GM23248 (cell line): ENCODE measurements at regions of chr1 and their contacts with region 1.

Region 1: GRCh38 chr1:163071405-163072255 is 2.5 kb downstream of the RGS4 start:
- DNase-seq: peak; percentile 93
- H3K4me3 ChIP-seq: peak overlapping the region; percentile 82
- H3K27ac ChIP-seq: peak overlapping the region; percentile 20
- H3K4me1 ChIP-seq: peaks cover 32% of the 10 kb centered on the region
- H3K27me3 ChIP-seq: no peaks in the 10 kb centered on the region

Region 2: DNA sequence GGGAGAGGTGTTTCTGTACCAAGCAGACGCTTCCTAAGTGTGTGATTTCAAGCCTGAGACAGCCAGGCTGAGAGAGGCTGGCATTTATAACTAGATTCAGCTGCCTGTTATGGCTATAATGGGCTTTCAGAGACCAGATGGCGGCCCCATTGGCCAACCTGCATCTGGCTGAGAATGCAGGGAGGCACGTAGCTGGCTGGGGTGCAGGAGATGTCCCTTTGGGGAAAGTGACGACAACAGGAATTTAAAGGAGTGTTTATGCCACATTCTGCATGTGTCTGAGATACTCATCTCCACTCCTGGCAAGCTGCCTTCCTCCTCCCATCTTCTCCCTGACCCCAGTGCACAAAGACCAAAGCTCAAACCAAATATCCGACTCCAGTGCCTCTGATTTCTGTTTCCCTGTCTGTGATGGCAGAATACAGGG is 189.4 kb before region 1 on chr1:
- in situ Hi-C with region 1: loop called (anchors 10 kb)
- DNase-seq: peak; percentile 36
- H3K4me3 ChIP-seq: no peak overlapping the region
- H3K27ac ChIP-seq: no peak overlapping the region
- H3K4me1 ChIP-seq: peaks cover 6% of the 10 kb centered on the region; the same call in 1 of the 2 replicates
- H3K27me3 ChIP-seq: no peaks in the 10 kb centered on the region

Region 3: DNA sequence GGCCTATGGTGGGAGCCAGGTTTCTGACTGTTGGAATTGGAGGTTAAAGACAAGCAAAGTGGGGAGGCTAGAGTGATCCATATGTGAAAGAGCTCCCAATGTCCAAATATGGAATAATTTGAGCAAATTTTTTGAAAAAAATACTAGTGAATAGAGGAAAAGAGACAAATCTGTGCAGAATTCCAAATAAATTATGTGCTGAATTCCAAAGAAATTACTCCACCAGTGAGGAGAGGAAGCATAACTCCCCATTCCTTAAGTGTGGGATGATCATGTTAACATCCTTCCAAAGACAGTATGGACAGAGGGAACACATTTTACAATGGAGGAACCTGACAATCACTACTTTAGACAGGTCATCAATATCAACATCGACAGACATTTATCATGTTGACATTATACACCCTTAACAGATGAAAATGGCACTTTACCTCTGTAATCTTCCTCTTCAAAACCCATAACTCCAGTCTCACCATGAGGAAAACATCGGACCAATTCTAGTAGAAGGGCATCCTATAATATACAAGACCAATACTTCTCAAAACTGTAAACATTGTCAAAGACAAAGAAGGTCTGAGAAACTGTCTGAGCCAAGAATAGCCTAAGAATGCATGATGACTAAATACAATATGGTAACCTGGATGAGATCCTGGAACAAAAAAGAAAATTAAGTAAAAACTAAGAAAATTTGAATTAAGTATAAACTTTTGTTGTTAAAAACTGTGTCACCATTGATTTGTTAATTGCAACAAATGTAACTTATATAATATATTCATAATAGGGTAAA is 73.9 kb before region 1 on chr1:
- in situ Hi-C with region 1: no loop called
- DNase-seq: peak; percentile 71
- H3K4me3 ChIP-seq: peak overlapping the region; percentile 44
- H3K27ac ChIP-seq: peak overlapping the region; percentile 81
- H3K4me1 ChIP-seq: peaks cover 57% of the 10 kb centered on the region
- H3K27me3 ChIP-seq: no peaks in the 10 kb centered on the region